ENCODE measurements at regions of chr2 and their contacts with region 1.

Region 1: DNA sequence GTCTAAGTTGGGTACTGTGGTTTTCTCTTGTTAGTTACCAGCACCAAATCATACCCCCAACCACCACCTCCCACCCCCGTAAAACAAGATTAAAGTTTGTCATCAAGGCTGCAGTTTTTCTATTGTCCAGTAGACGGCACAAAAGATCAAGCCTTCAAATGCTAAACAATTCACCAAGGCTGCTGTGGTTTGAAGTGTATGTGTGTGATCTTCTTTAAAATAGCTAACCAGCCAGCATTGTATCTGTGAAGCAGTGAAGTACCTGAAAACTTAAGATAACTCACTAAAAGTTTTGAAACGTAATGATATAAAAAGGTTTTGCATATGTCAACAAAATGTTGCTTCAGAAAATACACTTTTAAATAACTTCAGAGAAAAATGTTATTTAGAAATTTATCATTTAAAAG is 5.9 kb upstream of the MEIS1 start:
- DNase-seq: no peak
- ATAC-seq: no peak
- H3K4me3 ChIP-seq: no peak overlapping the region
- H3K27ac ChIP-seq: no peak overlapping the region
- H3K4me1 ChIP-seq: no peaks in the 10 kb centered on the region
- H3K27me3 ChIP-seq: peaks cover 2% of the 10 kb centered on the region

Region 2: DNA sequence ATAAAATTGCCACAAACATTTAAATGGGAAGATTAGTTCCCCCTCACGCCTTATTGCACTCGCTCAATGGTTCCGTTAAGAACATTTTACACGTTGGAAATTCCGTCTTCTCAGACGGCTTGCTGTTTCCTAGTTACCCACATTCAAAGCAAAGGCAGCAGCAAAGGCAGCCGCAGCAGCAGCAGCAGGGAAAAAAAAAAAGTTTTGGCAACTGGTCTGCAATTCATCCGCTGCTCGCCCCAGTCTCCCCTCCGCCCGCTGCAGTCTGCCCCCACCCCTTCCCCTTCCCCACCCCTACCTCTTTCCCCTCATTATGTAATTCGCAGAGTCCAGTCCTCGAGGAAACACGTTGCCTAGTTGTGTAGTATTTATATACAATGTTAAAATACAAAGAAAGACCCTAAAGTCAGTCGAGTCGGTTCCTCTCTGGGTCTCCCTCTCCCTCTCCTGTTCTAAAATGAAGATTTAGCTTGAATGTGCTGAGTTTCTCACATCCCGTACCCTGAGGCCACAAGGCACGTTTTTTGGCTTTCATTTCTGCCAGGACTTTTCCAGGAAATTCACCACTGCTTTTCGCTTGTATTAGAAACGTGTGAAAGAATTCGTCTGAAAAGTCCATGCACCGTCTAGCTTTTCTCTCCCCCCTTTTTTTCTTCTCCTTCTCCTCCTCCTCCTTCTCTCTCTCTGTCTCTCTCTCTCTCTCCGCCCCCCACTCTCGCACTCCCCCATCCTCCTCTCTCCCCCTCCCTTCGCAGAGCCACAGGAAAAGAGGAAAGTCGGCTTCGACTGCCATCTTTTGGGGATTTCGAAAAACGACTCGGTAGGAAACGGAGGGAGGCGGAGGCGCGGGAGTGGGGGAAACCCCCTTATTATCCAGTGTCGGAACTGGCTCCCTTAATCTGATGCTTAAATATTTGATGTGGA is 145.9 kb after region 1 on chr2:
- intact Hi-C with region 1: loop called (anchors 5 to 10 kb)
- DNase-seq: peak; percentile 50 to 78 (median 76)
- ATAC-seq: peak; percentile 79 to 83
- H3K4me3 ChIP-seq: peak overlapping the region; percentile 83
- H3K27ac ChIP-seq: peak overlapping the region; percentile 36
- H3K4me1 ChIP-seq: no peaks in the 10 kb centered on the region
- H3K27me3 ChIP-seq: peaks cover 2% of the 10 kb centered on the region

Measured in right cardiac atrium (tissue), 5 donors.